ENCODE measurements at regions of chrX and their contacts with region 1.

Region 1: DNA sequence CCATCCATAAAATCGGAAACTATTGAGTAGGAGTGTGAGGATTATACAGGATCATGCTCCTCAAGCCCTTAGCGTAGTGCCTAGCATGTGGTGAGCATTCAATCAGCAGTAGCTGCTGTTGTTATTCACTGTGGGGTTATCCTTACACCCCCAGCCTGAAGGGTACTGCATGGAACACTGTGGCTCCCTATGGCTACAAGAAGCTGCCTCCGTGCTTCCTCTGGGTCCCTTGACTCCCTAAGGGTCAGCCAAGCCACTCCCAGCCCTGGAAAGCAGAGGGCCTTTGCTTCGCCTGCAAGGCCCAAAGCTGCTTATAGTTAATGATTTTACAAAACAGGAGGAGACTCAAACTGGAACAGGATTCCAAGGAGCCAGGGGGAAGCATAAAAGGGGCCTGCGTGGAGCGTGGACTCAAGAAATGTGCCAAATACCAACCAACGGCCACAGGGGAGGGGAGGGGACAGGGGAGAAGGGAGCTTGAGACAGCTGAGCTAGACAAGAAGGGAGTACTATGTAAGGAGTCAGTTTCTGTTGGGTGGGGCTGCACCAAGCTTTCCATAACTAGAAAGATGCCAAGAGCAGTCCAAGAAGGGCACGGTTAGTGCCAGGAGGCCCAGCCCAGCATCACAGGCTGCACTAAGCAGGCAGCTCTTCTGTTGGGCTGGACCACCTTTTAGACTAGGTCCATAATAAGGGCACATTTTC is 15.9 kb downstream of the SEPTIN6 start:
- DNase-seq: no peak
- H3K4me3 Mint-ChIP-seq: peak overlapping the region; percentile 78
- H3K27ac Mint-ChIP-seq: peak overlapping the region; percentile 87
- H3K4me1 Mint-ChIP-seq: peaks cover 49% of the 10 kb centered on the region
- H3K27me3 Mint-ChIP-seq: no peaks in the 10 kb centered on the region

Region 2: GRCh38 chrX:119662958-119663357 is 14.1 kb before region 1 on chrX:
- intact Hi-C with region 1: loop called (anchors 2 kb)
- DNase-seq: no peak
- H3K4me3 Mint-ChIP-seq: no peak overlapping the region
- H3K27ac Mint-ChIP-seq: peak overlapping the region; percentile 5
- H3K4me1 Mint-ChIP-seq: peaks cover 28% of the 10 kb centered on the region
- H3K27me3 Mint-ChIP-seq: no peaks in the 10 kb centered on the region